Caco-2 (cell line): ENCODE measurements at regions of chr20 and their contacts with region 1.

Region 1: DNA sequence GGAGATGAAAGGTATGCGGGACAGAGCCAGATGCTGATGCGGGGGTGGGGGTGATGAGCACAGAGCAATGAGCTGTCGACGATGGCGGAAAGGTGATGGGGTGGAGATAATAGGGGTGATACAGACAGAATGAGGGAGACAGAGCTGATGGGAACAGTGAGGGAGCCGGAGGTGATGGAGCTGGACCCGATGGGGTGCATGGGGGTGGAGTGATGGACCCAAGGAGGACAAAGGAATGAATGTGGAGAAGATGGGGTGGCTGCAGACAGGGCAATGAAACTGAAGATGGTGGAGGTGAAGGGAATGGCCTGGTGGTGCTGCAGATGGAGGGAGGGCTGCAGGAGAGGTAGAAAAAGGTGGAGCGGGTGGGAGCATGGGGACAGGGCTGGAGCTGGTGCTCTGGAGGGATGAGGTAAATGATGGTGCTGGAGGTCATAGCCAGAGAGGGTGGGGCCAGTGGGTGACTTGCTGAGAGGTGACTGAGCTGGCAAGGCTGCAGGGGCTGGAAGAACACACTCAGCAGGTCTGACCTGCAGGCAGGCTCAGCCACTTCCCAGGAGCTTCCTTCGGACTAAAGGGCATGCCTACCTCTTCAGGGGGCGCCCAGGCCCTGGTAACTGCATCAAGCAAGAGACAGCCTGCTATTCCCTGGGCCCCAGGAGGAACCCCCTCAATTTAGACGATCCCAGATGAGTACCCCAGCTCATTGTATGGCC is 6.0 kb upstream of the FOXS1 start:
- DNase-seq: no peak
- H3K4me3 ChIP-seq: no peak overlapping the region
- H3K4me3 Mint-ChIP-seq: no peak overlapping the region
- H3K27ac Mint-ChIP-seq: no peak overlapping the region
- H3K4me1 ChIP-seq: peaks cover 7% of the 10 kb centered on the region; the same call in 1 of the 2 replicates
- H3K4me1 Mint-ChIP-seq: no peaks in the 10 kb centered on the region
- H3K27me3 ChIP-seq: peaks cover 11% of the 10 kb centered on the region
- H3K27me3 Mint-ChIP-seq: peaks cover 18% of the 10 kb centered on the region
- CTCF ChIP-seq: no peak

Region 2: GRCh38 chr20:31806564-31807355 is 44.6 kb before region 1 on chr20:
- CTCF ChIA-PET with region 1: no interaction called
- POLR2A ChIA-PET with region 1: no interaction called
- intact Hi-C with region 1: no loop called
- DNase-seq: no peak
- H3K4me3 ChIP-seq: no peak overlapping the region
- H3K4me3 Mint-ChIP-seq: no peak overlapping the region
- H3K27ac Mint-ChIP-seq: no peak overlapping the region
- H3K4me1 ChIP-seq: no peaks in the 10 kb centered on the region
- H3K4me1 Mint-ChIP-seq: no peaks in the 10 kb centered on the region
- H3K27me3 ChIP-seq: no peaks in the 10 kb centered on the region
- H3K27me3 Mint-ChIP-seq: no peaks in the 10 kb centered on the region
- CTCF ChIP-seq: no peak

Region 3: GRCh38 chr20:31861346-31862156 is 10.2 kb after region 1 on chr20:
- CTCF ChIA-PET with region 1: interaction called, 12 read pairs
- POLR2A ChIA-PET with region 1: no interaction called
- intact Hi-C with region 1: no loop called
- DNase-seq: peak; percentile 91
- H3K4me3 ChIP-seq: peak overlapping the region; percentile 75
- H3K4me3 Mint-ChIP-seq: peak overlapping the region; percentile 78
- H3K27ac Mint-ChIP-seq: peak overlapping the region; percentile 5
- H3K4me1 ChIP-seq: peaks cover 16% of the 10 kb centered on the region
- H3K4me1 Mint-ChIP-seq: peaks cover 8% of the 10 kb centered on the region
- H3K27me3 ChIP-seq: no peaks in the 10 kb centered on the region
- H3K27me3 Mint-ChIP-seq: peaks cover 7% of the 10 kb centered on the region
- CTCF ChIP-seq: no peak

Region 4: GRCh38 chr20:31968291-31969126 is 117.1 kb after region 1 on chr20:
- CTCF ChIA-PET with region 1: interaction called, 23 read pairs
- POLR2A ChIA-PET with region 1: no interaction called
- intact Hi-C with region 1: no loop called
- DNase-seq: peak; percentile 88 to 97
- H3K4me3 ChIP-seq: no peak overlapping the region
- H3K4me3 Mint-ChIP-seq: peak overlapping the region; percentile 61
- H3K27ac Mint-ChIP-seq: no peak overlapping the region
- H3K4me1 ChIP-seq: 0 out of 2 replicates have a peak, but pooled peaks cover 11% of the 10 kb centered on the region
- H3K4me1 Mint-ChIP-seq: no peaks in the 10 kb centered on the region
- H3K27me3 ChIP-seq: peaks cover 2% of the 10 kb centered on the region
- H3K27me3 Mint-ChIP-seq: peaks cover 35% of the 10 kb centered on the region
- CTCF ChIP-seq: peak in 1 of 2 experiments; percentile 11

Region 5: GRCh38 chr20:32382102-32382950 is 530.9 kb after region 1 on chr20:
- CTCF ChIA-PET with region 1: no interaction called
- POLR2A ChIA-PET with region 1: interaction called, 11 read pairs
- intact Hi-C with region 1: no loop called
- DNase-seq: no peak
- H3K4me3 ChIP-seq: no peak overlapping the region
- H3K4me3 Mint-ChIP-seq: no peak overlapping the region
- H3K27ac Mint-ChIP-seq: peak overlapping the region; percentile 34
- H3K4me1 ChIP-seq: peaks cover 4% of the 10 kb centered on the region; the same call in 1 of the 2 replicates
- H3K4me1 Mint-ChIP-seq: peaks cover 10% of the 10 kb centered on the region
- H3K27me3 ChIP-seq: no peaks in the 10 kb centered on the region
- H3K27me3 Mint-ChIP-seq: no peaks in the 10 kb centered on the region
- CTCF ChIP-seq: no peak